IMR-90 (cell line): ENCODE measurements at regions of chr9 and their contacts with region 1.

Region 1: DNA sequence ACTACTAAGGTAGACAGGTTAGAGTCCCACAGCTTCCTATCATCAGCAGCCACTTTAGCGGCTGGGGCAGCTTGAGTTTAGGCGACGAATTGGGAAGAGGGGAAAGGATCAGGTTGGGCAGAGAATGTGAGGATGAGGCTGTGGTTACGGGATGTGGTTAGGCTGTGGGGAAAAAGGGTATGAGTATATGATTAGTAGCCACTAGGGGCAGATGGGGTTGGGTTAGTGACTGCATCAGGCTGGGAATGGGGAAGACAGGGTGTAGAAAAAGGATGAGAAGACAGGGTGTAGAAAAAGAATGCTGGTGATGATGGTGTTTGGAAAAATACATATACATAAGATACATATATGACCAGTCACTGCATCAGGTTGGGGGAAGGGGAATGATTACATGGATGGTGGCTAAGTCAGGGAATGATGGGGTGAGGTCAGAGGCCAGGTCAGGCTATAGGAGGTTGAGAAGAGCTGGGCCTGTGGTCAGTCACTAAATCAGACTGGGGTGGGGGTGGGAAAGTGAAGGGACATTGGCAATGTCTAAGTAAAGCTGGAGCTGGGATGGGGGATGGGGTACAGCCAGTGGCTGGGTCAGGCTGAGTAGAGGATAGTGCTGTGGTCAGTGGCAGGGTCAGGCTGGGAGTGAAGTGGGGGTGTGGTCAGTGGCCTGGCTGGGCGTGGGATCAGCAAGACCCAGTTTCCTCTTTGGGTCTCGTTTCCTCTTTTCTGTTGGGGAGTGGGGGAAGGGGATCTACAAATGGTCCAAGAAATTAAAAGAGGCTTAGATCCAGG is 2.1 kb downstream of the TLN1 start:
- DNase-seq: peak; percentile 91
- ATAC-seq: peak; percentile 21
- H3K4me3 ChIP-seq: peak overlapping the region; percentile 99
- H3K27ac ChIP-seq: peak overlapping the region; percentile 90
- H3K4me1 ChIP-seq: peaks cover 25% of the 10 kb centered on the region
- H3K27me3 ChIP-seq: no peaks in the 10 kb centered on the region
- CTCF ChIP-seq: peak; percentile 68
- POLR2A ChIP-seq: no peak
- RAD21 ChIP-seq: peak; percentile 35; the same call in 1 of the 2 replicates

Region 2: GRCh38 chr9:35603987-35604577 is 125.8 kb before region 1 on chr9:
- CTCF ChIA-PET with region 1: no interaction called
- POLR2A ChIA-PET with region 1: no interaction called
- dilution Hi-C with region 1: no loop called
- in situ Hi-C with region 1: no loop called
- intact Hi-C with region 1: loop called (anchors 1 kb)
- DNase-seq: peak; percentile 99
- ATAC-seq: peak; percentile 94
- H3K4me3 ChIP-seq: peak overlapping the region; percentile 53
- H3K27ac ChIP-seq: peak overlapping the region; percentile 75
- H3K4me1 ChIP-seq: peaks cover 5% of the 10 kb centered on the region
- H3K27me3 ChIP-seq: no peaks in the 10 kb centered on the region
- CTCF ChIP-seq: peak; percentile 82
- POLR2A ChIP-seq: peak; percentile 85
- RAD21 ChIP-seq: peak; percentile 62

Region 3: DNA sequence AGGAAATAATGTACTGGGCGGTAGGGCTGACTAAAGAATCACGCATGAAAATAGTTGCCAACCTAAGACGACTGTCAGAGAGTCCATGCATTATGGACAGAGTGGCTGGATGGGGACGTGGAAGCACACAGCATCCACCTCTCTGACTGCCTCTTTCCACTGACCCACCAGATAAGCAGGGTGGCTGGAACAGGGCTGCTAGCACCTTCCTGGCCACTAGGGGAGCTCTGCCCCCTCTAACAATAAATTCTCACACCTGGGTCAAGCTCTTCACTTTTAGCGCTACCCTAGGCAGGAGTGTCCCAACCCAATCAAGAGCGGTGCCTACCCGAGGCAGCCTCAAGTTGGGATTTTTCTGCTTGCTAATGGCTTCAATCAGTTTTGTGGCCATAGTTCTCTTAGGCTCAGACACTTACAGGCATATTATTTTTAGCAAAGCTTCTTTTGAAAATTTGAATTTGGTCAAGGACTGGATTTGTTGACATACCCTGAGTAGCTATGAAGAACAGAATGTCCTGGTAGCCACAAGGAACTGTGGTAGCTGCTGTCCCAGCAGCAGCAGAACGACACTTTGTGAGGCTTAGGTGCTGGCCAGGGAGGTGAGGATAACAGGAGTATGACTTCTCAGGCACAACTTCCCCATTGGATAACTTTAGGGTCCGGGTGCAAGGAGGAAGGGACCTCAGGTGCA is 33.2 kb before region 1 on chr9:
- CTCF ChIA-PET with region 1: interaction called, 8 read pairs
- POLR2A ChIA-PET with region 1: interaction called, 23 read pairs
- dilution Hi-C with region 1: no loop called
- in situ Hi-C with region 1: no loop called
- intact Hi-C with region 1: loop called (anchors 1 kb)
- DNase-seq: peak; percentile 40
- ATAC-seq: peak; percentile 60
- H3K4me3 ChIP-seq: no peak overlapping the region
- H3K27ac ChIP-seq: no peak overlapping the region
- H3K4me1 ChIP-seq: peaks cover 7% of the 10 kb centered on the region; the same call in 1 of the 2 replicates
- H3K27me3 ChIP-seq: no peaks in the 10 kb centered on the region
- CTCF ChIP-seq: peak; percentile 71
- POLR2A ChIP-seq: no peak
- RAD21 ChIP-seq: peak; percentile 52